CD8-positive, alpha-beta T cell (primary cell): ENCODE measurements at regions of chr4 and their contacts with region 1.

Region 1: DNA sequence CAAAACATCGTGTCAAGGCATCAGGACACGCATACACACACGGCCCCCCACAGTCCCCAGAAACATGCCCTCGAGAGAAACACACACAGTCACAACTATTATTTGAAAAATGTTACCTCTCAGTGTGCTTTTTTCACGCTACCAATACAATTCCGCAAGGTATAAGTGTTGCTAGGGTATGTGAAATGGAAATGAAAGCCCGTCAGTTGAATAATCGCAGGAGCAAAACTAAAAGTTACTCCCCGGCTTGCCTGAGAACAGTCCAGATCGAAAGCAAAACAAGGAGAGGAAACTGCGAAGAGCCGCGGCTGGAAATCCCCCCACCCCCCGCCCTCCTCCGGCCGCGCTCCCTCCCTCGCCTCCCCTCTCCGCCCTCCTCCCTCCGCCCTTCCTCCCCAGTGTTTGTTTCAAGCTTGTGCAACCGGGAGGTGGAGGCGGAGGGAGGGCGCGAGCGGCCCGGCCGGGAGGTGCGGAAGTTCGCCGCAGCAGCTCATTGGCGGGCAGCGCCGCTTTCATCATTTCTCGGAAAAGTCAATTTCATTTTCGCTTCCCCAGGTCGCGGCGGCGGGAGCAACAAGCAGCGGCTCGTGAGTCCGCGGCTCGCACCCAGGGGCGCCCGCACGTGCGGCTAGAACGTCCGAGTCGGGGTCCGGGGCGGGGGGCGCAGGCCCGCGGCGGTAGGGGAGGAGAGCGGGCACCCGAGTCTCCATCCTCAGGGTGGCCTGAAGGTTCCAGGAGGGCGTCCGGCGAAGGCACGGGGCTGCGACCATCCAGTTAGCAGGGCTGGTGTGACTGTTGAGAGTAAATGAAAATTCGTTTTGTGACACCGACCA is at the start of gene IRF2:
- DNase-seq: peak; percentile 91 to 99 (median 95)
- ATAC-seq: peak; percentile 82
- H3K4me3 ChIP-seq: peak within 1 kb of the TSS; percentile 78 to 93
- H3K4me3 Mint-ChIP-seq: peak within 1 kb of the TSS; percentile 98
- H3K27ac ChIP-seq: peak within 1 kb of the TSS; percentile 94 to 95
- H3K27ac Mint-ChIP-seq: peak within 1 kb of the TSS; percentile 99
- H3K4me1 ChIP-seq: peaks cover 38% of the 10 kb centered on the region
- H3K4me1 Mint-ChIP-seq: peaks cover 67% of the 10 kb centered on the region
- H3K27me3 ChIP-seq: no peaks in the 10 kb centered on the region
- H3K27me3 Mint-ChIP-seq: no peaks in the 10 kb centered on the region
- CTCF ChIP-seq: no peak
- total RNA-seq, gene IRF2: 7.9 to 9.3 TPM

Region 2: DNA sequence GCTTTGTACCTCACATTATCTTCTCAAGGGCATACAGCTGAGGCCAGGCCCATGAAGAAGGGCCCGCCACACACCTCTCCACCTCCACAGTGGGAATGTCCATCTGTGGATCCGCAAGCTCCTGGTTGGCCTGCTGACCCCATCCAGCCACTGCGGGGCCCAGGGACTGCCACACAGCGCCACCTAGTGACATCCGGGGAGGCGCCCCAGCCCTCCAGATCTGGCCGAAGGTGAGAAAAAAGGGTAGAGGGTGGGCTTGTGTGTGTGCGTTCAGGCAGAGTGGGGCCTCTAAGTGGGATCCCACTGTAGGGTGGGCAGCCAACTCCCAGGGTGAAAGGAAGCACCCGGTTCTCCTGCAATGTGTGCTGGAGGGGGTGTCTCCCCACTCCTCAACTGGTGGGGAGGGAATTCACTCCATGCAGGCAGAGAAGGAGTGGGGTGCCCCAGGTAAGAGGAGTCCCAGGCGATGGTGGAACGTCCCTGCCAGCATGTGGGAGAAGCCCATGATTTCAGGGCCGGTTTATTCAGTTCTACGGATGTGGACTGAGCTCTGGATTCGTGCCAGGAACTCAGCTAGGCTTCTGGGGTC is 374.1 kb before region 1 on chr4:
- CTCF ChIA-PET with region 1: no interaction called
- POLR2A ChIA-PET with region 1: no interaction called
- intact Hi-C with region 1: no loop called
- DNase-seq: peak in 7 of 9 experiments; percentile 12 to 53 (median 29)
- ATAC-seq: no peak
- H3K4me3 ChIP-seq: no peak overlapping the region
- H3K4me3 Mint-ChIP-seq: no peak overlapping the region
- H3K27ac ChIP-seq: no peak overlapping the region
- H3K27ac Mint-ChIP-seq: no peak overlapping the region
- H3K4me1 ChIP-seq: no peaks in the 10 kb centered on the region
- H3K4me1 Mint-ChIP-seq: peaks cover 5% of the 10 kb centered on the region
- H3K27me3 ChIP-seq: no peaks in the 10 kb centered on the region
- H3K27me3 Mint-ChIP-seq: peaks cover 28% of the 10 kb centered on the region
- CTCF ChIP-seq: peak; percentile 49

Region 3: GRCh38 chr4:184417802-184418511 is 56.5 kb before region 1 on chr4:
- CTCF ChIA-PET with region 1: no interaction called
- POLR2A ChIA-PET with region 1: interaction called, 7 read pairs
- intact Hi-C with region 1: loop called (anchors 1 to 2 kb)
- DNase-seq: peak in 3 of 9 experiments; percentile 14 to 68 (median 53)
- ATAC-seq: peak; percentile 71
- H3K4me3 ChIP-seq: peak overlapping the region in 1 of 2 experiments; percentile 44
- H3K4me3 Mint-ChIP-seq: peak overlapping the region; percentile 73
- H3K27ac ChIP-seq: peak overlapping the region; percentile 61 to 80
- H3K27ac Mint-ChIP-seq: peak overlapping the region; percentile 98
- H3K4me1 ChIP-seq: peaks cover 33% of the 10 kb centered on the region
- H3K4me1 Mint-ChIP-seq: peaks cover 71% of the 10 kb centered on the region
- H3K27me3 ChIP-seq: no peaks in the 10 kb centered on the region
- H3K27me3 Mint-ChIP-seq: no peaks in the 10 kb centered on the region
- CTCF ChIP-seq: no peak

Region 4: GRCh38 chr4:184432127-184432922 is 42.2 kb before region 1 on chr4:
- CTCF ChIA-PET with region 1: no interaction called
- POLR2A ChIA-PET with region 1: no interaction called
- intact Hi-C with region 1: no loop called
- DNase-seq: no peak
- ATAC-seq: no peak
- H3K4me3 ChIP-seq: no peak overlapping the region
- H3K4me3 Mint-ChIP-seq: no peak overlapping the region
- H3K27ac ChIP-seq: no peak overlapping the region
- H3K27ac Mint-ChIP-seq: peak overlapping the region; percentile 67
- H3K4me1 ChIP-seq: peaks cover 22% of the 10 kb centered on the region
- H3K4me1 Mint-ChIP-seq: peaks cover 75% of the 10 kb centered on the region
- H3K27me3 ChIP-seq: no peaks in the 10 kb centered on the region
- H3K27me3 Mint-ChIP-seq: no peaks in the 10 kb centered on the region
- CTCF ChIP-seq: no peak

Region 5: DNA sequence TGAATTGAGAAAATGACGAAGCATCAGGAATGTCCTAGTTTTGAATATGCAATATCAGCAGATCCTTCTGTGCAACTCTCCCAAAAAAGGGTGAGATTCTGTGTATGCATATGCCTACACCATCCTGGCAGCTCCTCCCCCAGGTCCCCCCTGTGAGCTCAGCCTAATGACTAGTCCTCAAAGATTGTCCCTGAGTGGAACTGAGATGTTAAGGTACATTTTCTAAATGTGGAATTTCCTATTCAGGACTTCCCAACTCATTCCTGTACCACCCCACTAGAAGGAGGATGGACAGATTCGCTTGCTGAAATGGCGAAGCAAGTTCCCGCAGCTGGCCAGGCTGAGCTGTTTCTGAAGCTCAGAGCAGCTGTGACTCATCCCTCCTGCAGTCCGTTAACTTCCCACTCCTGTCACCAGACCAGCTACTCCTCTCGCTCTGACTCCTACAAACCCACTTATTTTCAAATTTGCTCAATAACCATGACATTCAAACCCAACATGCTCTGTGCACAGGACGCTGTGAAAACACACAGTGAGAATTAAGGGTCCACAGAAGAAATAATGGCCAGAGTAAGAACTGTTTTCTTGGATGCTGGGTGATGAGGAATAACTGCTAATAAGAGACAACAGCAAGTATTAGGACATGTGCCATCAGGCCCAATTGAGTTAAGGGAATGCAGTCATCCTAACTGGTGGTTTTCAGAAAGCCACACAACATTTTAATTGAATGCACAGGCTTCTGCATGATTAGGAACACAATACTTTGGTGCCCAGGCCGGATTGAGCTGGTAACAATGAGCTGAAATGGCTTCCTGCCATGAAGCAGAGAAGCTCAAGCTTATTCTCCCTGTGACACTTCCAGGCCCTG is 39.9 kb after region 1 on chr4:
- CTCF ChIA-PET with region 1: no interaction called
- POLR2A ChIA-PET with region 1: interaction called, 12 read pairs
- intact Hi-C with region 1: no loop called
- DNase-seq: peak in 3 of 9 experiments; percentile 8 to 44 (median 22)
- ATAC-seq: no peak
- H3K4me3 ChIP-seq: no peak overlapping the region
- H3K4me3 Mint-ChIP-seq: peak overlapping the region; percentile 30
- H3K27ac ChIP-seq: peak overlapping the region in 1 of 2 experiments; percentile 27
- H3K27ac Mint-ChIP-seq: peak overlapping the region; percentile 6
- H3K4me1 ChIP-seq: no peaks in the 10 kb centered on the region
- H3K4me1 Mint-ChIP-seq: peaks cover 10% of the 10 kb centered on the region
- H3K27me3 ChIP-seq: no peaks in the 10 kb centered on the region
- H3K27me3 Mint-ChIP-seq: no peaks in the 10 kb centered on the region
- CTCF ChIP-seq: no peak

Region 6: GRCh38 chr4:184733654-184734524 is 259.4 kb after region 1 on chr4 and contains the start of gene CENPU:
- CTCF ChIA-PET with region 1: no interaction called
- POLR2A ChIA-PET with region 1: interaction called, 10 read pairs
- intact Hi-C with region 1: loop called (anchors 1 kb)
- DNase-seq: peak; percentile 87 to 97 (median 94)
- ATAC-seq: peak; percentile 95
- H3K4me3 ChIP-seq: peak within 1 kb of the TSS; percentile 74 to 79
- H3K4me3 Mint-ChIP-seq: peak within 1 kb of the TSS; percentile 87
- H3K27ac ChIP-seq: peak within 1 kb of the TSS; percentile 2 to 43
- H3K27ac Mint-ChIP-seq: peak within 1 kb of the TSS; percentile 84
- H3K4me1 ChIP-seq: peaks cover 8% of the 10 kb centered on the region
- H3K4me1 Mint-ChIP-seq: peaks cover 18% of the 10 kb centered on the region
- H3K27me3 ChIP-seq: no peaks in the 10 kb centered on the region
- H3K27me3 Mint-ChIP-seq: no peaks in the 10 kb centered on the region
- CTCF ChIP-seq: no peak
- total RNA-seq, gene CENPU: 3.4 TPM

Region 7: GRCh38 chr4:185425647-185426352 is 951.3 kb after region 1 on chr4 and contains the start of gene UFSP2:
- CTCF ChIA-PET with region 1: no interaction called
- POLR2A ChIA-PET with region 1: no interaction called
- intact Hi-C with region 1: loop called in 1 of 2 experiments (anchors 10 kb)
- DNase-seq: peak; percentile 75 to 97 (median 89)
- ATAC-seq: peak; percentile 86
- H3K4me3 ChIP-seq: peak within 1 kb of the TSS; percentile 87 to 90
- H3K4me3 Mint-ChIP-seq: peak within 1 kb of the TSS; percentile 83
- H3K27ac ChIP-seq: peak within 1 kb of the TSS; percentile 97 to 99
- H3K27ac Mint-ChIP-seq: peak within 1 kb of the TSS; percentile 100
- H3K4me1 ChIP-seq: peaks cover 18% of the 10 kb centered on the region
- H3K4me1 Mint-ChIP-seq: peaks cover 36% of the 10 kb centered on the region
- H3K27me3 ChIP-seq: no peaks in the 10 kb centered on the region
- H3K27me3 Mint-ChIP-seq: peaks cover 5% of the 10 kb centered on the region
- CTCF ChIP-seq: no peak
- total RNA-seq, gene UFSP2: 13.4 to 17.4 TPM